ENCODE measurements at regions of chr2 and their contacts with region 1.

Region 1: GRCh38 chr2:177332041-177332991 is 60.3 kb upstream of the AGPS start:
- DNase-seq: peak; percentile 46
- H3K4me3 ChIP-seq: no peak overlapping the region; a peak in 1 of 4 replicates
- H3K27ac ChIP-seq: peak overlapping the region; percentile 58 to 67
- H3K4me1 ChIP-seq: peaks cover 3 to 13% of the 10 kb centered on the region in 2 experiments; a peak in 3 of 4 replicates
- H3K27me3 ChIP-seq: no peaks in the 10 kb centered on the region
- CTCF ChIP-seq: peak; percentile 75
- EP300 ChIP-seq: no peak
- RAD21 ChIP-seq: peak; percentile 87

Region 2: DNA sequence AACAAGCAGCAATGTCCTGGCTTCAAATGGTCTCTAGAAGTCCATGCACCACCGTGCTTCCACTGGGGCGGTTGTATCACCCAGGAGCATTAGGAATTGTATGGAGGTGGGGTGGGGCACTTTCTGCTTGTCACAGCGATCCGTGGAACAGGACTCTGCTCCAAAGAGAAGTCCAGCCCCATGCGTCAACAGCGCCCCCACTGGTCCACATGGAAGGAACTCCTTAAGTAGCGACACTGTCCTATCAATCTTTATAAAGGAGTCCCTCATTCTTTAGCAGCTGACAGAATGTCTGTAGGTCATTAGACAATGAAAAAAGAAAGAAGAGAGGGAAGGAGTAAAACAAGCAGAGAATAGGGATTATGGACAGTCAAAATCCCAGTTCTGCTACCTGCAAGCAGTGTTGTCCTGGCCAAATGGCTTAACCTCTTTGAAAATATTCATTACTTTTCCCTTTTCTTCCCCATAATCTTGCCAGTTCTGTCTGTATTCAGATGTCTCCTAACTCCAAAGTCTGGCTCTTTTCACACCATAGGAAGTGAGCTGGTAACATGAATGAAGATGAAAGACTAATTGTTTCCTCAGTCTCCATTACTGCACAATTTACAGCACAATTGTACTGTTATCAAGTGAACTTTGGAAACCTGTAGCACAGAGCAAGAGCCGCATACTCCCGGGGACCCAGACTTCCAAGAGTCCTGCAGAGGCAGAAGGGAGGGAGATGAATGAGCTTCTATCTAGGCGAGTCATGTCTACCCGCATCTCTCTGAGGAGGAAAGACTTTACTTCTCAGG is 77.7 kb before region 1 on chr2:
- CTCF ChIA-PET with region 1: no interaction called
- POLR2A ChIA-PET with region 1: no interaction called
- DNase-seq: peak; percentile 24
- H3K4me3 ChIP-seq: no peak overlapping the region
- H3K27ac ChIP-seq: peak overlapping the region in 1 of 2 experiments; percentile 20; a peak in 1 of 4 replicates
- H3K4me1 ChIP-seq: peaks cover 6 to 24% of the 10 kb centered on the region in 2 experiments; a peak in 2 of 4 replicates
- H3K27me3 ChIP-seq: no peaks in the 10 kb centered on the region
- CTCF ChIP-seq: peak; percentile 57
- EP300 ChIP-seq: no peak
- RAD21 ChIP-seq: peak; percentile 11; the same call in 1 of the 2 replicates

Region 3: GRCh38 chr2:177344316-177344715 is 12.0 kb after region 1 on chr2:
- CTCF ChIA-PET with region 1: interaction called, 20 read pairs
- POLR2A ChIA-PET with region 1: no interaction called
- DNase-seq: no peak
- H3K4me3 ChIP-seq: no peak overlapping the region
- H3K27ac ChIP-seq: no peak overlapping the region
- H3K4me1 ChIP-seq: peaks cover 0 to 4% of the 10 kb centered on the region in 2 experiments; a peak in 1 of 4 replicates
- H3K27me3 ChIP-seq: no peaks in the 10 kb centered on the region
- CTCF ChIP-seq: no peak
- EP300 ChIP-seq: no peak
- RAD21 ChIP-seq: no peak

Region 4: GRCh38 chr2:177419274-177419673 is 87.0 kb after region 1 on chr2:
- CTCF ChIA-PET with region 1: interaction called, 68 read pairs
- POLR2A ChIA-PET with region 1: no interaction called
- DNase-seq: no peak
- H3K4me3 ChIP-seq: no peak overlapping the region
- H3K27ac ChIP-seq: no peak overlapping the region
- H3K4me1 ChIP-seq: peaks cover 0 to 22% of the 10 kb centered on the region in 2 experiments; a peak in 2 of 4 replicates
- H3K27me3 ChIP-seq: no peaks in the 10 kb centered on the region
- CTCF ChIP-seq: no peak
- EP300 ChIP-seq: no peak
- RAD21 ChIP-seq: no peak

Region 5: DNA sequence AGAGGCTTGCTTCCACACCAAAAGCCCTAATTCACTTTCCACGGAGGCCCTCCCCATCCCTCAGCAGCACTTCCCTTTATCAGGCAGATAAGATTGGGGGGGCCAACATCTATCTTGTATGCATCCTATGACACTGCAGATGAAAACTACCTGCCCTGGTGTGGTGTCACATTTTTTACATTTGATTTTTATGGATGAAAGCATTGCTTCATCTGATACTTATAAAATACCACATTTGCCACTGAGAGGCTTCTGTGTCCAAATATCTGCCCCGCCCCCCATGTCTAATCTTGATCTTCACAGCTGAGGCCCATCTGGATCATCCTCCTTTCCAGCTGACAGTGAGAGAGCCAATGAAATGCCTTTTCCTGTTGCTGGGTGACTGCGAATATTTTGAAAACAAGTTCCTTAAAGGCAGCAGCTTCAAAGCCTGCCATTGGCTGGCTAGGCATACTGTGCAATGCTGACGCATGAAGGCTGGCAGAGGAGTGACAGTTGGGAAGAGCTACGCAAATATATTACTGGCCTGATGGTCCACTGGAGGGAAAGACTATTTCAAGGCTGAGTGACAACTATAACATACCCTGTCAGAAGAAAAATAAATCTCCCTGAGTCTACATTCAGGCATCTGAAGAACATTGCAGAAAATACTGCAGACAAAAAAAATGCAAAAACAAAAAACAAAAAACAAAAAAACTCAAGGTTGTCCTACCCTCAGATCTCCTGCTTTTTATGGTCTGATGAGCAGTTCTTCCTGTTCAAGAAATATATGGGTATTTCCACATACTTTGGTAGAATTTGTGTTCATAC is 421.6 kb after region 1 on chr2:
- CTCF ChIA-PET with region 1: interaction called, 22 read pairs
- POLR2A ChIA-PET with region 1: no interaction called
- DNase-seq: peak; percentile 41
- H3K4me3 ChIP-seq: no peak overlapping the region
- H3K27ac ChIP-seq: no peak overlapping the region; a peak in 1 of 4 replicates
- H3K4me1 ChIP-seq: peaks cover 0 to 23% of the 10 kb centered on the region in 2 experiments; a peak in 2 of 4 replicates
- H3K27me3 ChIP-seq: no peaks in the 10 kb centered on the region
- CTCF ChIP-seq: no peak
- EP300 ChIP-seq: no peak
- RAD21 ChIP-seq: no peak

Region 6: DNA sequence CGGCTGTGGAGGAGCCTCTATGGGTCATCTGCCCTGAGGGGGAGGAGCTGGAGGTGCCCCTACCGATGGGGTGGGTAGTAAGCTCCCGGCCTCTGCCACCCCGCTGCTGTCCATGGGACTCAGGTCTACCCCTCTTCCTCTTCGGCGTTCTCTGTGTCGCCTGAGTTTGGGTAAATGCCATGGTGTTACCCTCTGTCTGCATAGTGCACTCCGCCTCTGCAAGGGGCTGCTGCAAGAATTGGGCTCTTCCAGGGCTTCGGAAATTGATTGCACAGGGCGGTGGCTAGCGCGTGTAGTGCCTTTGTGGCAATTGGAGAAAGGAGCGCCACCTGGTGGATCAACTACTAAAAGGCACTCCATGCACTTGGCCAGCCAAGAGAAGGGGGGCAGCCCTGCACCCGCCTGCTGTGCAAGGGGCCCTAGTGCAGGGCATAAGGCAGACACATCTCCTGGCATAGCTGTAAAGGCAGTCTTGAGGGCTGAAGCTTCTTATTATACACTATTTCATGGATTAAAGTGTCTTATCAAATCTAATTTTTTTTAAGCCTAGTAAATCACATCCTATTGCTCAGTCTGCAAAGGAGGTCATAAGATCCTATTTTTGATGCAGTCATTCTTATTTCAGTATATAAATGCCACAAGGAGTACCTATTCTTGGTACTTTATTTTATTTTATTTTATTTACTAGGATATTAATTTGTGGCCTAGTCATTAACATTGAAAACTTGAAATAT is 431.4 kb after region 1 on chr2:
- CTCF ChIA-PET with region 1: interaction called, 22 read pairs
- POLR2A ChIA-PET with region 1: no interaction called
- DNase-seq: peak; percentile 67
- H3K4me3 ChIP-seq: no peak overlapping the region
- H3K27ac ChIP-seq: no peak overlapping the region
- H3K4me1 ChIP-seq: peaks cover 0 to 4% of the 10 kb centered on the region in 2 experiments; a peak in 1 of 4 replicates
- H3K27me3 ChIP-seq: no peaks in the 10 kb centered on the region
- CTCF ChIP-seq: peak; percentile 78
- EP300 ChIP-seq: no peak
- RAD21 ChIP-seq: peak; percentile 54